Mammary epithelial cell (primary cell): ENCODE measurements at regions of chr4 and their contacts with region 1.

Region 1: DNA sequence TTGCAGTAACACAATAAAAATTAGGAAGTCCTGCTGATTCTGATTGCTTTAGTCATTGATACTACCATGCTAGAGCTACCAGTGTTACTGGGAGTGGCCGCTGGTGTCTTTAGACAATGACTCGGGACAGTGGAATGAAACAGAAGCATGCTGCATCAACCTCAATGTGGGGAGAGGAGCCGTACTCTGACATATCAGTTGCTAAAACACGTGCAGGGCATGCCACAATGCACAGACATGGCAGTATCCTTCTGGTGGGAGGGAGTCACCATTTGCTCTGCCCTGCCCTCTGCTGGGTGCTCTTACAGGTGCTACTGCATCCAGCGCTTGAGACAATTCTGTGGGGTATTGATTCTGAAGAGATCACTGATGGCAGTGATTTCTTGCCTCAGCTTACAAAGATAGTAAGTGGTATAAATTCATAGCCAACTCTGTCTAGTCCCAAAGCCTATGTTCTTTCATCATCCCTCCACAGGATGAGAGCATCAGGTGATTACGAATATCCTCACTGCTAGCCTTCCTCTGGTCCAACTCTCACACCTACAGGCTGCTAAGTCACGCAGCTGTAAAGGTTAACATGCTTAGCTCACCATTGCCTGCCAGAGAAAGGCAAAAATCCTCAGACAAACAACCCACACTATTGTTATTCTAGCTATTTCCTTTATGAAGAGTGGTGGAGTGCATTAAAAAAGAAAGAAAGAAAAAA is 43.7 kb downstream of the NSG1 start:
- DNase-seq: peak; percentile 74
- H3K4me3 ChIP-seq: no peak overlapping the region
- H3K27ac ChIP-seq: no peak overlapping the region
- H3K4me1 ChIP-seq: peaks cover 7% of the 10 kb centered on the region
- H3K27me3 ChIP-seq: no peaks in the 10 kb centered on the region
- CTCF ChIP-seq: peak; percentile 83 to 86

Region 2: DNA sequence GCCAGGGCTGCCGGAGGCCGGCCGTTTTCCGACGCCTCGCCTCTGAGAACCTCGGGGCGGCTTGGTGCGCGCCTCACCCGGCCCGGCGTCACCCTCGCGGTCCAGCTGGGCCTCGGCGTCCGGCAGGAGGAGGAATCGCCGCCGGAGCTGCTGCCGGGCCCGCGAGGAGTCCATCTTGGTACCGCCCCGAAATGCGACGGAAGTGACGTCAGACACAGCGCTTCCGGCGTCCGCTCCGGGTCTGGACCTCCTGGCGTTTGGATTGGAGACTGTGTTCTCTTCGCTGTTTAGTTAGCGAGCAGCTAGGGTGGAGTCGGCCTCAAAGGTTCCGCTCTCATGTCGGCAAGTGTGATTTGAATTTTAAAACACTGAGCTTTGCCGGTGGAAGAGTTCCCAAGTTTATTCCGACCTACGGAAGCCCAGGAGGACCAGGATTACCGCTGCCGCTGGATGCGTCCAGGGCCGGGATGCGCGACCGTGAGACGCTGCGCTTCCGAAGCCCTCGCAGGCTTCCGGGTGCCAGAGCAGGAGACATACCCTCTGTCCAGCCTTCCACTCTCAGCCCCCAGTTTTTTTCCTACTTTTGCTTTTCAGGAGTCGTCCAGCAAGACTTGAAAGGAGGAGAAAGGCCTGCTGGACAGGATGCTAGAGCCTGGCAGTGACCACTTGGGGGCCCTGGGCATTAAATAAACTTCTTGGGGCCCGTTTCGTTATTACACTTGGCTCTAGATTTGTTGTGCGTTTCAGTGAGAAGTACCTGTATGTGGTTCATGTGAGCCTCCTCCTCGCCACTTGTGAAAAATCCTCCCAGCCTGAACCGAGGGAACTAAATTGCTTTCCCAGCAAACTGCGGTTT is 182.4 kb before region 1 on chr4 and contains the start of gene TMEM128:
- CTCF ChIA-PET with region 1: no interaction called
- dilution Hi-C with region 1: no loop called
- in situ Hi-C with region 1: no loop called
- intact Hi-C with region 1: loop called (anchors 2 kb)
- DNase-seq: peak; percentile 92
- H3K4me3 ChIP-seq: peak within 1 kb of the TSS; percentile 75 to 97 (median 97)
- H3K27ac ChIP-seq: peak within 1 kb of the TSS; percentile 87
- H3K4me1 ChIP-seq: peaks cover 17% of the 10 kb centered on the region
- H3K27me3 ChIP-seq: no peaks in the 10 kb centered on the region
- CTCF ChIP-seq: peak in 1 of 2 donors; percentile 32
- total RNA-seq, gene TMEM128: 20.3 to 28.8 TPM

Region 3: DNA sequence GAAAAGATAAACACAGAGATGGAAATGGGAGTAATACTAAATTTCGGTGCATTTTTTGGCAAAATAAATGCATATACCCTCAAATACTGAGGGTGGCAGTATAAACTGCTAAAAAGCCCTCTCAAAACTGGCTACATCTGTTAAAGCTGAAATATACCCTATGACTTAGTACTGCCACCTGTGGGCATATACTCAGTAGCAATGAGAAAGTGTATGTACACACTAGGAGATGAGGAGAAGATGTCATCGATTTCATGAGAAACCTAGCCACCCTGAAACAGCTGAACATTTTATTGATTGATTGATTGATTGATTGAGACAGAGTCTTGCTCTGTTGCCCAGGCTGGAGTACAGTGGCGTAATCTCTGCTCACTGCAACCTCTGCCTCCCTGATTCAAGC is 170.4 kb before region 1 on chr4:
- CTCF ChIA-PET with region 1: no interaction called
- dilution Hi-C with region 1: no loop called
- in situ Hi-C with region 1: no loop called
- intact Hi-C with region 1: loop called (anchors 1 kb)
- DNase-seq: peak; percentile 50
- H3K4me3 ChIP-seq: no peak overlapping the region
- H3K27ac ChIP-seq: no peak overlapping the region
- H3K4me1 ChIP-seq: no peaks in the 10 kb centered on the region
- H3K27me3 ChIP-seq: no peaks in the 10 kb centered on the region
- CTCF ChIP-seq: peak; percentile 54 to 64

Region 4: GRCh38 chr4:4289941-4290850 is 140.4 kb before region 1 on chr4 and contains the starts of genes LYAR and ZBTB49:
- CTCF ChIA-PET with region 1: no interaction called
- dilution Hi-C with region 1: no loop called
- in situ Hi-C with region 1: no loop called
- intact Hi-C with region 1: loop called (anchors 1 kb)
- DNase-seq: peak; percentile 93
- H3K4me3 ChIP-seq: peak within 1 kb of the TSS; percentile 61 to 98 (median 96)
- H3K27ac ChIP-seq: peak within 1 kb of the TSS; percentile 58
- H3K4me1 ChIP-seq: peaks cover 9% of the 10 kb centered on the region
- H3K27me3 ChIP-seq: no peaks in the 10 kb centered on the region
- CTCF ChIP-seq: no peak
- total RNA-seq, gene LYAR: 6.3 to 36.3 TPM
- total RNA-seq, gene ZBTB49: 4.7 to 8.6 TPM

Region 5: GRCh38 chr4:4362991-4363697 is 67.5 kb before region 1 on chr4:
- CTCF ChIA-PET with region 1: no interaction called
- dilution Hi-C with region 1: loop called (anchors 10 kb)
- in situ Hi-C with region 1: no loop called
- intact Hi-C with region 1: no loop called
- DNase-seq: no peak
- H3K4me3 ChIP-seq: no peak overlapping the region
- H3K27ac ChIP-seq: no peak overlapping the region
- H3K4me1 ChIP-seq: no peaks in the 10 kb centered on the region
- H3K27me3 ChIP-seq: peaks cover 5% of the 10 kb centered on the region
- CTCF ChIP-seq: no peak

Region 6: DNA sequence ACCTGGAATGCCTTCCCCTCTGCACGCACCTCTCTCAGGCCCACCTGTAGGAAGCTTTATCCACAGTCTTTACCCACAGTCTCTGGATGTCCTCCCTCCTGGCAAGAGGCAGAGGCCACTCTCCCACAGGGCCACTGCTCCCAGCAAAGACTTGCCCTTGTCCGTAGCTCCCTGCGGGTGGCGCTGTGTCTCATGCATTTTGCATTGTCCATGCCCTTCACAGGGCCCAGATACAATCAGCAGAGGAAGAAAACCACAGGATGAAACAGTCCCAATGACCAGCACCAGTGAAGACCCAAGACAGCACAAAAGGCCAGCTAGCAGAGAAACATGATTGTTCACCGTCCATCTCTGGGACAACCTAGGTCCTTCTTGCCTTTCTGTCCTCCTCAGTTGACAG is 45.8 kb before region 1 on chr4:
- CTCF ChIA-PET with region 1: interaction called, 3 read pairs
- dilution Hi-C with region 1: no loop called
- in situ Hi-C with region 1: no loop called
- intact Hi-C with region 1: loop called (anchors 1 kb)
- DNase-seq: peak; percentile 37
- H3K4me3 ChIP-seq: no peak overlapping the region
- H3K27ac ChIP-seq: no peak overlapping the region
- H3K4me1 ChIP-seq: peaks cover 14% of the 10 kb centered on the region
- H3K27me3 ChIP-seq: peaks cover 2% of the 10 kb centered on the region
- CTCF ChIP-seq: peak; percentile 58 to 79

Region 7: DNA sequence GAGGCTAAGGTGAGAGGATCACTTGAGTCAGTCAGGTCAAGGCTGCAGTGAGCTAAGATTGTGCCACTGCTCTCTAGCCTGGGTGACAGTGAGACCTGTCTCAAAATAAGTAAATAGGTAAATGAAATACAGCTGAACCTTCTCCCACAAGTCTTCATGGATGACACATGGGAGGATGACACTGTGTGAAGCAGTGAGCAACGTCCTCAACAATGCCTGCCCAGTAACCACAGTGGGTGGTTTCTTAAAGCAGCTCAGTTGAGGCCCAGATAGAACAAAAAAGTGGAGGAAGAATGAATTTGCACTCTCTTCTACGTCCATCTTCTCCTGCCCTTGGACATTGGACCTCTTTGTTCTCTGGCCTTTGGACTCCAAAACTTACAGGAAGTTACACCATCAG is 481.5 kb after region 1 on chr4:
- CTCF ChIA-PET with region 1: no interaction called
- dilution Hi-C with region 1: no loop called
- in situ Hi-C with region 1: no loop called
- intact Hi-C with region 1: no loop called
- DNase-seq: no peak
- H3K4me3 ChIP-seq: no peak overlapping the region
- H3K27ac ChIP-seq: no peak overlapping the region
- H3K4me1 ChIP-seq: no peaks in the 10 kb centered on the region
- H3K27me3 ChIP-seq: no peaks in the 10 kb centered on the region
- CTCF ChIP-seq: no peak

Region 8: GRCh38 chr4:5050520-5051277 is 620.1 kb after region 1 on chr4:
- CTCF ChIA-PET with region 1: interaction called, 12 read pairs
- dilution Hi-C with region 1: no loop called
- in situ Hi-C with region 1: no loop called
- intact Hi-C with region 1: no loop called
- DNase-seq: peak; percentile 63
- H3K4me3 ChIP-seq: peak overlapping the region; percentile 46 to 59 (median 53)
- H3K27ac ChIP-seq: no peak overlapping the region
- H3K4me1 ChIP-seq: peaks cover 12% of the 10 kb centered on the region
- H3K27me3 ChIP-seq: no peaks in the 10 kb centered on the region
- CTCF ChIP-seq: peak; percentile 59 to 81